ENCODE measurements at regions of chr3 and their contacts with region 1.

Region 1: DNA sequence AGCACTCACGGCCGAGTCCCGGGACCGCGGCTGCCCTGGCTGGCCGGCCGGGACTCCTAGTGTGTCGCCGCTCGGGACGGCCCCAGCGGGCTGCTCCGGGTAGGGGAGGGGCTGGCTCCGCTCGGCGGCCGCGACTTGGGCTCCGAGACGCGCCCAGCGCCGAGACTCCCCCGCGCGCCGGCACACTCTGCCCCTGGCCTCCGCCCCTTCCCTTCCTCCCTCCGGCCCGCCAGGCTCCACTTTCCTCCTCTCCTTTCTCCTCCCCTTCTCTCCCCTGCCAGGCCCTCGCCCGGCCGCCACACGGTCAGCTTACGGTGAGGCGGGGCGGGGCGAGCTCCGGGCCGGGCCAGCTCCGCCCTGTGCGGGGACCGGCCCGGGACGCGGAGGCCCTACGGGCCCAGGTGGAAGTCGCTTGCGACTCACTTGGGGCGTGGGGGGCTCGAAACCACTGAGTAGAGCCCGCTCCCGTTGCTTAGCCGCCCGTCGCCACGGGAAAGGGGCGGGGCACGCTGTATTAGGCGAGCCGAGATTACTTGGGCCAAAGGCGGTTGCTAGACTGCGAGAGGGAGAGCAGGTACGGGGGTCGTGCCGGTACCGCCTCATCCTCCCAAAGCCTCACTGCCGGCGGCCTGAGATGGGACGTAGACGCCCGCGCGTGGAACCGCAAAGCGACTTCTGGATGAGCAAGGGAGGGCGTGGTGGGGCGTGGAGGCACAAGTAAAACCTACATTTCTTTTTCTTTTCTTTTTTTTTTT is at the start of gene ITGB5:
- DNase-seq: peak; percentile 88 to 95
- H3K4me3 ChIP-seq: peak within 1 kb of the TSS; percentile 93 to 94
- H3K27ac ChIP-seq: peak within 1 kb of the TSS; percentile 98 to 99
- H3K4me1 ChIP-seq: peaks cover 0 to 41% (median 28%) of the 10 kb centered on the region in 4 donors
- H3K27me3 ChIP-seq: no peaks in the 10 kb centered on the region
- CTCF ChIP-seq: no peak

Region 2: GRCh38 chr3:124775877-124776276 is 111.5 kb before region 1 on chr3:
- intact Hi-C with region 1: loop called (anchors 5 kb)
- DNase-seq: no peak
- H3K4me3 ChIP-seq: no peak overlapping the region
- H3K27ac ChIP-seq: peak overlapping the region; percentile 46 to 93
- H3K4me1 ChIP-seq: peaks cover 0 to 100% (median 81%) of the 10 kb centered on the region in 4 donors
- H3K27me3 ChIP-seq: no peaks in the 10 kb centered on the region
- CTCF ChIP-seq: no peak

Region 3: DNA sequence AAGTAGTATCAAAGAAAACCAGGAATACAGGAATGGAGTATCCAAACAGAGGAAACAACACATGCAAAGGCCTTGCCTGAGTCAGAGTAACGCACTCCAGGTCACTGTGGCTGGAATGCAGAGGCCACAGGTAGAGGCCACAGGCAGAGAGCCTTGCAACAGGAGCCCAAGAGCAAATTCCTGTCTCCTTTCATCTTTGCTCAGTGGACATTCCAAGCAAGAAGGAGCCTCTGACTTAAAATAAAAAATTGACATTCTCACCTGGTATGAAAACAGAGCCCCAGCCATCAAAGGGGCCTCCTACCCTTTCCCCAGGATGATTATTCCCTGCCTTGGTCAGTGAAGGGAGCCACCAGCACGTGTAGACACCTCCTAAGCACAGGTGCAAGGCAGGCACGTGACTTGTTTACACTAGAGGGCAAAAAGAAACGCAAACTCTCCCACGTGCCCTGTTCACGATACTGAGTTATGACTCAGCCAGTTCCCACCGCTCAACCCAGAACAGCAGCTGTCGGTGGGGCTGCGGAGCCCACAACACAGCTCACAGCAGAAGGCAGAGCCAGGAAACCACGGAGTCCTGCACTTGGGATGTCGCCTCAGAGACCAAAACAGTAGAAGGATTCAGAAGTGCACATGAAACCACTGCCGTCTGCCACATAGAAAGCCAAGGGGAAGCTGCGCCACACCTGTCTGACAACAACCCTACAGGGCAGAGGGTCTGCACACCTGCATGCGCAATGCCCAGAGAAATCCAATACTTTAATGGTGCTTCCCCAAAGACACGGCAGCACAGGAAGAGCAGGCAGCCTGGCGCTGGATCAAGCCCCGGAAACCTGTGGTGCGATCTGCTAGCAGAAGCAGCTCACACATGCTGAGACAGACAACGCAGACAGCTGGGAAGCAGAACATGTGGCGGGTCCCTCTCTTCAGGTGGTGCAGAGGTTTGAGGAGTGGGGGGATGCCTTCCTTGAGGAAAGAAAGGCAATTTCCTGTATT is 52.3 kb before region 1 on chr3:
- intact Hi-C with region 1: loop called (anchors 10 kb)
- DNase-seq: peak; percentile 44 to 79
- H3K4me3 ChIP-seq: peak overlapping the region in 1 of 2 donors; percentile 8
- H3K27ac ChIP-seq: peak overlapping the region; percentile 78 to 85
- H3K4me1 ChIP-seq: peaks cover 4 to 98% (median 77%) of the 10 kb centered on the region in 4 donors
- H3K27me3 ChIP-seq: no peaks in the 10 kb centered on the region
- CTCF ChIP-seq: no peak

Measured in tibial artery (tissue), 4 donors.